ENCODE measurements at regions of chr10 and their contacts with region 1.

Region 1: DNA sequence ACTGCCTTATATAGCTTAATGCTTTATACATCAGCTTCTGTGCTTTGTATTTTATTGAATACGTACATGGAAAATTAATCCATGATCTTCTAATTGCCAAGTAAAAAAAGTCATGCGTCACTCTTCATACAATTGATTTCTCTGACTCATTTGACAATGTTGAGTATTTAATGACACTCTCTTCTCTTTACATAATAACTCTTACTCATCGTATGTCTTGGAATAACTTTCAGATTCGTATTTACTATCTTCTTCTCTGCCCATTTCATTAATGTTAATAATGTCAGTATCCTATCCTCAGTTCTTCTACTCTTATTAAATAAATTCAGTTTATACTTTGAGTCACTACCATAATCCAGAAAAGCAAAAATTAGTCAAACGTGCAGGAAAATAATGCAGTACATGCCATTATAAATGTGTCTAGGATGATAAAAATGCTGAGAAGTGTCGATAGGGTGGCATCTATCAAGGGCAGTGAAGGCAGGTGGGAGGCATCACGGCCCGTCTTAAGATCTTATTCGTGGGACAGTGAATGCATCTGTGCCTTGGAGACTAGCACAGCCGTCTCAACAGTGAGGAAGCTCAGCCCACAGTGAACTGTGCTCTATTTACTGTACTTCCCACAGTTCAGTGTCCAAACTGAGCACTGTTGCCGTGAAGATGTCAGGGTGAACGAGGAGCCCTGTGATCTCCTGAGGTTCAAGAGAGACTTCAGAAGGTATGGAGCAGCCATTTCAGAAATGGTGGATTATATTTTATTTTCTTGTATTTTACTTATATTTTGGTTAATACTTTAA is 39.8 kb upstream of the AKR1E2 start:
- DNase-seq: no peak
- H3K4me3 Mint-ChIP-seq: no peak overlapping the region
- H3K27ac Mint-ChIP-seq: no peak overlapping the region
- H3K4me1 Mint-ChIP-seq: peaks cover under 1% of the 10 kb centered on the region
- H3K27me3 Mint-ChIP-seq: no peaks in the 10 kb centered on the region
- CTCF ChIP-seq: no peak

Region 2: GRCh38 chr10:4802706-4803487 is 16.7 kb after region 1 on chr10:
- CTCF ChIA-PET with region 1: no interaction called
- intact Hi-C with region 1: no loop called
- DNase-seq: no peak
- H3K4me3 Mint-ChIP-seq: no peak overlapping the region
- H3K27ac Mint-ChIP-seq: no peak overlapping the region
- H3K4me1 Mint-ChIP-seq: peaks cover 1% of the 10 kb centered on the region
- H3K27me3 Mint-ChIP-seq: no peaks in the 10 kb centered on the region
- CTCF ChIP-seq: no peak

Region 3: DNA sequence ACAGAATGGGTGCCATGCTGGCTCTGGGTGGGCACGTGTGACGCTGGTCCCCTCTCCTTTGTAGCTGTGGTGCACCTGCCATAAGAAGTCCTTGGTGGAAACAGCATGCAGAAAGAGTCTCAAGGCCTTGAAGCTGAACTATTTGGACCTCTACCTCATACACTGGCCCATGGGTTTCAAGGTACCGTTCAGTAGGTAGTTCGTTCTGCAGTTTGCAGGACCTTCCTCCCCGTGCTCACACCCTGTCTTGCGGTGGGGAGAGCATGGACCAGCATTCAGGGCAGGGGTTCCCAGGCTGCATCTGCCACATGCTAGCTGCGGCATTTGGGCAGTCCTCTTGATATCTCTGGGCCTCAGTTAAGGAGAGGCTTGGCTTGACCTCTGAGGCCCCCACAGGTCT is 47.0 kb after region 1 on chr10:
- CTCF ChIA-PET with region 1: interaction called, 13 read pairs
- intact Hi-C with region 1: no loop called
- DNase-seq: no peak
- H3K4me3 Mint-ChIP-seq: no peak overlapping the region
- H3K27ac Mint-ChIP-seq: no peak overlapping the region
- H3K4me1 Mint-ChIP-seq: no peaks in the 10 kb centered on the region
- H3K27me3 Mint-ChIP-seq: no peaks in the 10 kb centered on the region
- CTCF ChIP-seq: no peak